GM13977 (cell line): ENCODE measurements at regions of chr20 and their contacts with region 1.

Region 1: DNA sequence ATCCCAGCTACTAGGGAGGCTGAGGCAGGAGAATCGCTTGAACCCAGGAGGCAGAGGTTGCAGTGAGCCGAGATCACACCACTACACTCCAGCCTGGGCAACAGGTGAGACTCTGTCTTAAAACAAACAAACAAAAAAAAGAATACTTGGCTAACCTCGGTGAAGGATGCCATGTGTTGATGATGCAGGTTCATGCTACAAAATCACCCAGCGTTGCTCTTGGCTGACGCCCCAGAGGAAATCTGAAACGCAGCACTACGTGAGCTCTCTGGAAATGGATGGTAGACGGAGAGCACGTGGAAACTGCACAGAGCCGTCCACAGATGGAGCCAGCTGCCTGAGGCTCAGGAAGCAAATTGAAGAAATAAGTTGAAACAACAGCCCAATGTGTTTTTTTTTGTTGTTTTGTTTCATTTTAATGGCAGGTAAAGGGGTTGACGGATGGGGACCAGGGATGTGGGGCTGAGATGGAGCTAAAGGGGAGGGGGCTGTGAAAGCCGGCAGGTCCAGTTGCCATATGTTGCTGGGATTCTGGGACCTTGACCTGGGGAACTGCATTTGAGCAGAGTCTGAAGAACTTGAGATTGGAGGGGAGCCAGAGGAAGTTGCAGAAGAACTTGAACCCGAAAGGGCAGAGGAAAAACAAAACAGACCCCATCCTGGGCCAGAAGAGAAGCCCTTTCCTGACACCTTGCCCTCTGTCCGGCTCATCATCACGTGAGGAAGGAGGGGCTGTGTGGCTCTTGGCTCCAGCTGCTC is 12.8 kb upstream of the MANBAL start:
- DNase-seq: peak; percentile 68
- CTCF ChIP-seq: peak; percentile 69

Region 2: DNA sequence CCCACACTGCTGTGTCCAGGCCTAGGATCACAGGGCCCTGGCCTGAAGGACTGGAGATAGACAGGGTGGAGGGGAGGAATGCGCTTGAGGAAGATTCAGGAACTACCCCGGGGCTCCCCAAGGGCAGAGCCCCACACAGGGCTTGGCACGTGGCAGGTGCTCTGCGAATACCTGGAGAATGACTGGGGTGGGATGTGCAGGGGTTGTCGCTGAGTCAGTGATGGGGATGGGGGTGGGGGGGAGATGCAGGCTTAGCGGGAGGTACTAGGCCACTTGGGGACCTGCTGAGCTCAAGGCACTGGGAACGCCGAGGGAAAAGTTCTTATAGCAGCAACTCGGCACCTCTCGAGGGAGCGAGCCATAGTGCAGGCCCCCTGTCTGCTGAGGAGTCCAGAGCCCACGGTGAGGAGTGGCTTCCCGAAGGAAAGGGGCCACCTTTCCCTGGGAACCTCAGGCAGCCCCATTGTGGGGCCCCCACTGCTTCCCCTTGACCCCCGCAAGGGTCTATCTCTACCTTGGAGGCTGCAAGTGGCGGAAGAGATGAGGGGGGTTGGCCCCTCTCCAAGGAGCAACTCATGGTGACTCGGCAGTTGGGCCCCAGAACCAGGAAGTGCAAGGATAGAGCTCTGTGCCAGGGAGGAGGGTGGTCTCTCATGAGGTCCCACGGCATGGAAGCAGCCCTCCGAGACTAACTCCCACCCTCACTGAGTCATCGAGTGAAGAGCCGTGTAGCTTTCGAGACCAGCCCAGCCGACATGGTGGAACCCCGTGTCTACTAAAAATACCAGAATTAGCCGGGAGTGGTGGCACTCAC is 102.3 kb after region 1 on chr20:
- in situ Hi-C with region 1: loop called (anchors 5 kb)
- DNase-seq: no peak
- CTCF ChIP-seq: no peak

Region 3: GRCh38 chr20:37932900-37933299 is 656.2 kb after region 1 on chr20:
- in situ Hi-C with region 1: no loop called
- DNase-seq: no peak
- CTCF ChIP-seq: no peak